Lower lobe of right lung (tissue), 2 donors: ENCODE measurements at regions of chr1 and their contacts with region 1.

Region 1: GRCh38 chr1:89987170-89987819 is 7.6 kb upstream of the ZNF326 start:
- DNase-seq: no peak
- ATAC-seq: peak; percentile 91 to 92
- H3K4me3 ChIP-seq: no peak overlapping the region
- H3K27ac ChIP-seq: no peak overlapping the region
- H3K4me1 ChIP-seq: no peaks in the 10 kb centered on the region
- H3K27me3 ChIP-seq: no peaks in the 10 kb centered on the region
- CTCF ChIP-seq: peak; percentile 88

Region 2: GRCh38 chr1:89804642-89805237 is 182.6 kb before region 1 on chr1:
- intact Hi-C with region 1: loop called (anchors 5 kb)
- DNase-seq: peak; percentile 82
- ATAC-seq: peak; percentile 92 to 94
- H3K4me3 ChIP-seq: no peak overlapping the region
- H3K27ac ChIP-seq: no peak overlapping the region
- H3K4me1 ChIP-seq: no peaks in the 10 kb centered on the region
- H3K27me3 ChIP-seq: no peaks in the 10 kb centered on the region
- CTCF ChIP-seq: peak; percentile 92

Region 3: GRCh38 chr1:90162216-90162615 is 174.9 kb after region 1 on chr1:
- intact Hi-C with region 1: no loop called
- DNase-seq: no peak
- ATAC-seq: no peak
- H3K4me3 ChIP-seq: no peak overlapping the region
- H3K27ac ChIP-seq: no peak overlapping the region
- H3K4me1 ChIP-seq: no peaks in the 10 kb centered on the region
- H3K27me3 ChIP-seq: no peaks in the 10 kb centered on the region
- CTCF ChIP-seq: no peak